Vagina (tissue), 2 donors: ENCODE measurements at regions of chr9 and their contacts with region 1.

Region 1: GRCh38 chr9:92293452-92294296 is at the start of gene IARS1:
- DNase-seq: peak in 1 of 2 donors; percentile 99
- H3K4me3 ChIP-seq: peak within 1 kb of the TSS; percentile 72 to 74
- H3K27ac ChIP-seq: peak within 1 kb of the TSS; percentile 61
- H3K4me1 ChIP-seq: peaks cover 22% of the 10 kb centered on the region
- H3K27me3 ChIP-seq: no peaks in the 10 kb centered on the region
- CTCF ChIP-seq: peak in 2 of 3 experiments; percentile 18 to 26
- POLR2A ChIP-seq: peak in 1 of 2 donors; percentile 30
- total RNA-seq, gene IARS1: 63.8 TPM

Region 2: DNA sequence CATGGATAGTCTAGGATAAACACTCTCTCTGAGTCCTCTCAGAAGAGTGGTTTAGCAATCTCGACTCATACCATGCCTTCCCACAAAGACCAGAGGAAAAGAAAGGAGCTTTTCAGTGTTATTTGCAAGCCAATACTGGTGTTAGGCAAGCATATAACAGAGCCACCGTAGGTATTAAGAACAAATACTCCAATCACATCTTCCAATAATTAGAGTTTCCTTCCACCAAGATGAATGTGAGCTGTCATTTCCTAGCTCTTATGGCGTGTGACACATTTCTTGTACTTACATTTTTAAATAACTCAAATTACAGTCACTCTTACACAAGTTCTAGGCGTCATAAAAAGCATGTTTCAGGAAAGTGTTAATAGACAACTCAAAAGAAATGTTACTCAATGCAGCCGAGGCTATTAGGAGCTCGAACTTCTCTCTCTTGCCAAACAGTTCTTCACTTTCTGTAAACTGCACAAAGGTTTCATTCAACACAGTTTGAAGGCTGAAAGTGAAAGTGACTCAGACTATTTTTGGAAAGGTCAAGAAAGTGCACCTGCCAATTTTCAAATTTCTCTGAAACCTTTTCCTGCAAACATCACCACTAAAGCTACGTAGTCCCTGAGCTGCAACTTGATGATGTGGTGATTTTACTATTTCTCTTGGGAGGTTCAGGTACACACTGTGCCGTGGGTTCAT is 1085.8 kb before region 1 on chr9:
- intact Hi-C with region 1: loop called (anchors 10 kb)
- DNase-seq: no peak
- H3K4me3 ChIP-seq: no peak overlapping the region
- H3K27ac ChIP-seq: peak overlapping the region; percentile 60
- H3K4me1 ChIP-seq: peaks cover 22% of the 10 kb centered on the region
- H3K27me3 ChIP-seq: no peaks in the 10 kb centered on the region
- CTCF ChIP-seq: no peak
- POLR2A ChIP-seq: no peak

Region 3: DNA sequence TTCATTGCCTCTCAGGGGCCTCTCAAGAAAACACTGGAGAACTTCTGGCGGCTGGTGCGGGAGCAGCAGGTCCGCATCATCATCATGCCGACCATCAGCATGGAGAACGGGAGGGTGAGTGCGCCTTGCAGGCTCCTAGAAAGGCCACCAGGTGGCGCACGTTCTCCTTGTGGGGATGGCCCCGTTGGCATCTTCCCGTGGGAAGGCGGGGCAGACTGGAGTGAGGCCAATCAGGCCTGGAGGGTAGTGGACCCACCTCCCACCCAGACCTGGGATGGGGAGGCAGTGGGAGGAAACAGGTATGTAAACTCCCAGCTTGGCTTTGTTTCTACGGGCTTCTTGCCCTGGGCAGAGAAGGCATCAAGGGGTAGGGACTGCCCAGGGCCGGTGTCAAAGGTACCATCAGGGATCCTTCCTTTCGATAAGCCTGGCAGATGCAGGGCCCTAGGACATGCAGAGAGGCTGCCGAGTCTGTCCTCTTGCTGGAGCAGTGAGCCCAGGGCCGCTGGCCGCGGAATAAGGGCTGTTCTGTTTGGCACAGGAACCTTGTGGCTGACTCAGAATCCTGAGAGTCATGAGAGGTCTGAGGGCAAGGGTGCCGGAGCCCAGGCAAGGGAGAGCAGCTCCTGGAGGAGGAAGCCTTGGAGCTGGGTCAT is 159.6 kb before region 1 on chr9:
- intact Hi-C with region 1: loop called (anchors 10 kb)
- DNase-seq: peak in 1 of 2 donors; percentile 88
- H3K4me3 ChIP-seq: peak overlapping the region in 1 of 2 donors; percentile 30
- H3K27ac ChIP-seq: peak overlapping the region; percentile 59
- H3K4me1 ChIP-seq: peaks cover 12% of the 10 kb centered on the region
- H3K27me3 ChIP-seq: no peaks in the 10 kb centered on the region
- CTCF ChIP-seq: peak; percentile 62 to 79 (median 76)
- POLR2A ChIP-seq: no peak